ENCODE measurements at regions of chr6 and their contacts with region 1.

Region 1: GRCh38 chr6:80214436-80215022 is 108.1 kb downstream of the BCKDHB start:
- DNase-seq: peak; percentile 10
- H3K4me3 ChIP-seq: no peak overlapping the region
- H3K27ac ChIP-seq: no peak overlapping the region
- H3K4me1 ChIP-seq: no peaks in the 10 kb centered on the region
- H3K27me3 ChIP-seq: no peaks in the 10 kb centered on the region
- CTCF ChIP-seq: peak; percentile 11 to 69 (median 44)
- POLR2A ChIP-seq: no peak

Region 2: GRCh38 chr6:80126657-80127345 is 87.7 kb before region 1 on chr6:
- intact Hi-C with region 1: no loop called
- DNase-seq: no peak
- H3K4me3 ChIP-seq: no peak overlapping the region
- H3K27ac ChIP-seq: no peak overlapping the region
- H3K4me1 ChIP-seq: no peaks in the 10 kb centered on the region
- H3K27me3 ChIP-seq: no peaks in the 10 kb centered on the region
- CTCF ChIP-seq: no peak
- POLR2A ChIP-seq: no peak

Region 3: DNA sequence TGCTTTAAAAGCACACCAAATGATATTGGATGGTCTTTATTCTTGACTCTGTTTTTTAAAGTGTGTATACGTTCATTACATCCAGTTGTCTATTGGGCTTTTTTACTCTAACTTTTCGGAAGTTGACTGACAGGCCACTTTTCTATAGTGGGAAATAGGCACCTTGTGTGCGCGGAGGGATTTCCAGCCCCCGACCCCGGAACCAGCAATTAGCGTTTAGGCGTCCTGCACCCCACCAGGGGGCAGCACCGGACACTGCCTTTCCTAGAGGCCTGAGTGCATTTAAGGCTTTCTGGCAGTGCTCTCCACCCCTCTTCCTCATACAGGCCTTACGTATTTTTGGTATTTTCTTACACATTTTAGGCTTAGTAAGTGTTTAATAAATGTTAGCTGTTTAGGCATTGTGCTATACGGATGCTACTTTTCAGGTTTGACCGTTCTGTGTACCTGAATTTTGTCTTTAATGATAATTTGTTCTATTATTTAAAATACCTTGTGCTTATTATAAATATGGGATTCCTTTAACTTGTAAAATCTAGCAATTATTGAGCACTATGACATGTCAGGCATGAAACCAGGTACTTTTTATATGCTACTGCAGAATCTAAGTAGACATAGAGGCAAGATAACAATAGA is 123.8 kb after region 1 on chr6:
- intact Hi-C with region 1: loop called (anchors 10 kb)
- DNase-seq: no peak
- H3K4me3 ChIP-seq: no peak overlapping the region
- H3K27ac ChIP-seq: no peak overlapping the region
- H3K4me1 ChIP-seq: no peaks in the 10 kb centered on the region
- H3K27me3 ChIP-seq: no peaks in the 10 kb centered on the region
- CTCF ChIP-seq: peak in 3 of 4 experiments; percentile 3 to 42 (median 42)
- POLR2A ChIP-seq: no peak

Region 4: DNA sequence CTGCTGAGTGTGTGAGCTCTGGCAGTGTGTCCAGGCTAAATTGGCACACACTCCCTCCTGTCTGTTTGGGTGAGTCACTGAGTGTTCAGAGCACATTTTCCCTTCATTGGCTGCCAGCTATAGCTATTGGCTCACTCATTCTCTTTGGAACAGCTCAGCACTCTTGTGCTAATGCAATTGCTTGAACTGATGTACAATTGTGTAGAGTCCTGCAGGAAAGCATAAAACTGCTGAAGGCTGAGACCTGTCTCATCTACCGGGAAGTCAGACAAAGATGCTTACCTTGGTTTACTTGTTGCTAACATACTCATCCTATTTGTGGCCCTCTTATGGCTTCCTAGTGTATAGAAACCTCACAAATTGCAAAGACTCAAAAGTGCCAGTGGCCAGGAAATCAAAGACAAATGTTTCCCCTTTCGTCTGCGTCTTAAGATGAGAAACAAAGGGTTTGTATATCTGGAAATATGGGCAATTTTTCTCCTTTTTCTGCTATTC is 243.0 kb after region 1 on chr6:
- intact Hi-C with region 1: loop called (anchors 10 kb)
- DNase-seq: peak; percentile 65
- H3K4me3 ChIP-seq: no peak overlapping the region
- H3K27ac ChIP-seq: no peak overlapping the region
- H3K4me1 ChIP-seq: no peaks in the 10 kb centered on the region
- H3K27me3 ChIP-seq: no peaks in the 10 kb centered on the region
- CTCF ChIP-seq: no peak
- POLR2A ChIP-seq: no peak

Region 5: DNA sequence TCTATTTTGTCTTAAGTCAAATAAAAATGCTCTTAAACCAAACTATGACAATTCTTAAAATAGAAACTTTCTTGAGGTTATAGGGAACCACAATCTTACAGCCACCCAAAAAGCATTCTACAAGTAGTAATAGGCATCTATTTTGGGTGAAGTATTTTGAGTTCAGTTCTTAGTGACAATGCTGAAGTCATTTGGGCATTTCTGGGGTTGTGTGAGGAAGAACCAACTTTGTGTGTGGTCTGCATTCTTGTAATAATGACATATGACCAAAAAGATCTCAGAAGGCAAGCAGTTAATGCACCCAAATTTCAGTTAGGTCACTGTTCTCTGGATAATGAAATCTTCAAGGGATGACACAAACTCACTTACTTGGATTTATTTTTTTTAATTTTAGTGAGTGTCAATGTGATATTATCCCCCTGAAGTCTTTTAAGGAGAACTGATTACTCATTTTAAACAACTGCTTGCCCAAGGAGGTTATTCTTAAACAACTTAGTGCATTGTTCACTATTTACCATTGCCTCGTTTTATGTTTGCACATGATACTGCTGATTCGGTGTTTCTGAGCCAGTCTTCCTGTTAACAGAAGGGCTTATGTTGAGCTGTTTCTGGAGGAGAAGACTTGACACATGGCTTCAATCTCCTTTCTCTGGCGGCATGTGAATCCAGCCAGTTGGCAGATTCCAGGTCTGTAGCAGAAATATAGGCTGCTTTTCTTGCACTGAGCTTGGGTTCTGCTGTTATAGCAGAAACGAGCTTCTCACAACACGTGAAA is 510.8 kb after region 1 on chr6:
- intact Hi-C with region 1: no loop called
- DNase-seq: no peak
- H3K4me3 ChIP-seq: no peak overlapping the region
- H3K27ac ChIP-seq: no peak overlapping the region
- H3K4me1 ChIP-seq: no peaks in the 10 kb centered on the region
- H3K27me3 ChIP-seq: no peaks in the 10 kb centered on the region
- CTCF ChIP-seq: no peak
- POLR2A ChIP-seq: no peak